ENCODE measurements at regions of chr12 and their contacts with region 1.

Region 1: DNA sequence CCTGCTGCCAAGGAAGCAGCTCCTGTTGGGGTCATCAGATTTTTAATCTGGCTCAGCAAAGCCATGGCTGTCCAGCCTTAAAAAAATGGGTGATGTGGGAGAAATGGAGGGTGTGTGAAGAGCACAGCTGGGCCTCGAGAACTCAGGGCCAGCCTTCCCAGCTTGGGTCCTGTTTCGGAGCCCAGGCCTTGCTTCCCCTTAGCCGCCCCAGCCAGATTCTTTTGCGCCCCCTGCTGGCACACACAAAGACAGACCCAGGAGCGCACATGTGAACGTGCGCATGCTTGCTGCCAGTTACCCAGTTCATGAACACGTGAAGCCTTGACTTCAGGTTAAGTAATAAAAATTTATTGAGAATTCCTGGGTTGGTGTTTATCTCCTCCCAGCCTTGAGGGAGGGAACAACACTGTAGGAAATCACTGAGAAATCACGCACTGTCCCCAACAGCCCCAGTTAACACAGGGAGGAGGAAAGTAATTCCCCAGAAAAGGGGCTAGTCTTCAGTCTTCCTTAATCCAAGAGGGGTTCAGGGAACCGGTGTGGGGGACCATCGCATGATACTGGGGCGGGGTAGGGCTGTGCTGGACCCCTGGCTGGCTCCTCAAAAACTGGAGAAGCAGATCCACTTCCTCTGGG is 5.3 kb downstream of the PHB2 start:
- DNase-seq: peak; percentile 85 to 97
- H3K4me3 ChIP-seq: no peak overlapping the region
- CTCF ChIP-seq: peak in 1 of 3 donors; percentile 94
- POLR2A ChIP-seq: no peak

Region 2: GRCh38 chr12:6828781-6829535 is 136.2 kb before region 1 on chr12:
- intact Hi-C with region 1: no loop called
- DNase-seq: peak in 1 of 2 donors; percentile 93
- H3K4me3 ChIP-seq: peak overlapping the region; percentile 68
- CTCF ChIP-seq: no peak
- POLR2A ChIP-seq: no peak

Region 3: GRCh38 chr12:6873094-6874014 is 91.8 kb before region 1 on chr12 and contains the start of gene SPSB2:
- intact Hi-C with region 1: loop called (anchors 10 kb)
- DNase-seq: peak; percentile 95 to 99
- H3K4me3 ChIP-seq: peak within 1 kb of the TSS; percentile 56
- CTCF ChIP-seq: no peak
- POLR2A ChIP-seq: no peak
- total RNA-seq, gene SPSB2: 6.8 to 14.7 (median 11.5) TPM